AG04450 (cell line): ENCODE measurements at regions of chr4 and their contacts with region 1.

Region 1: GRCh38 chr4:86043755-86044592 is 315.9 kb downstream of the MAPK10 start:
- DNase-seq: no peak
- H3K4me3 ChIP-seq: no peak overlapping the region
- H3K27ac ChIP-seq: no peak overlapping the region
- H3K27me3 ChIP-seq: no peaks in the 10 kb centered on the region
- CTCF ChIP-seq: peak; percentile 69

Region 2: DNA sequence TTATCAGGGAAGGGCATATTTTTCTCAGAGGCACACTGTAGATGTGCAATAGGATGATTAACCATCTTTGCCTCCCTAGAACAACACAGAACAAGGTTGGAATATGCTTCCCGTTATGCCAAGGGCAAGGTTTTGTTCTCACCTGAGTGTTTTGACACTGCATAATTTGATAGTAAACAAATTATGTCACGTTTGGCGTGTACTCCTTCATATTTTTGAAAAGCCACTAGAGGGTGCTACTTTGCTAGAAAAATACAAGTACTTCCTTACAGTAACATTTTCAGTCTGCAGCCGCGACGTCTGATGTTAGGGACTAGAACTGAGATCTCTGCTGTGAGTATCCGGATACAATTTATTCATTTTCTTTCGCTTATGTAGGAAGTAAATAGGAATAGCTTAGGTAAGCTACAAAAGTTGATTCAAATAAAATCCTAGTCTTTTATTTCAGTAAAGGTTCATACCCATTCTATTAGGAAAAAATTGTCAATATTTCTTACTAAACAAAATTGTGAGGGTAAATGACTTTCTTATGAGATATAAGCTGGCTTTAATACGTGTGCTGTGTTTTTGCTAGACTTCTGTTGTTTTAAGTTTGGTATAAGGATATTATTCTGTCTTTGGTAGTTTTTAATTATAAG is 896.4 kb before region 1 on chr4:
- CTCF ChIA-PET with region 1: interaction called, 20 read pairs
- POLR2A ChIA-PET with region 1: no interaction called
- DNase-seq: peak; percentile 6
- H3K4me3 ChIP-seq: no peak overlapping the region
- H3K27ac ChIP-seq: no peak overlapping the region
- H3K27me3 ChIP-seq: no peaks in the 10 kb centered on the region
- CTCF ChIP-seq: peak; percentile 70

Region 3: DNA sequence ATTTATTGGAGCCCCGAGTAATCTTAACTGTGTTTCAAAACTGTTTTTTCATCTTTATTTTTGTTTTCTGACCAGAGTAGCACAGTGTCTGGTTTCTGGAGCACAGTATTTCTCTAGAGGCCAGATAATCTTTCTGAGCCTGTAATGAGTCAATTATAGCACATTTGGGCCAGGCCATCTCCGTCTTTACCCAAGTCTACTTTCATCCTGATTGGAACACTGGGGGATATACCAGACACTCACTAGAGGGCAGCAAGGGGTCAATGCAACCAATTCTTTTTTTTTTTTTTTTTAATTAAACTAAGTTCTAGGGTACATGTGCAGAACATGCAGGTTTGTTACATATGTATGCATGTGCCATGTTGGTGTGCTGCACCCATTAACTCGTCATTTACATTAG is 287.0 kb before region 1 on chr4:
- CTCF ChIA-PET with region 1: interaction called, 14 read pairs
- POLR2A ChIA-PET with region 1: no interaction called
- DNase-seq: no peak
- H3K4me3 ChIP-seq: no peak overlapping the region
- H3K27ac ChIP-seq: no peak overlapping the region
- H3K27me3 ChIP-seq: no peaks in the 10 kb centered on the region
- CTCF ChIP-seq: peak; percentile 67

Region 4: GRCh38 chr4:86032476-86033022 is 11.4 kb before region 1 on chr4:
- CTCF ChIA-PET with region 1: interaction called, 12 read pairs
- POLR2A ChIA-PET with region 1: no interaction called
- DNase-seq: no peak
- H3K4me3 ChIP-seq: no peak overlapping the region
- H3K27ac ChIP-seq: peak overlapping the region; percentile 57
- H3K27me3 ChIP-seq: no peaks in the 10 kb centered on the region
- CTCF ChIP-seq: no peak

Region 5: DNA sequence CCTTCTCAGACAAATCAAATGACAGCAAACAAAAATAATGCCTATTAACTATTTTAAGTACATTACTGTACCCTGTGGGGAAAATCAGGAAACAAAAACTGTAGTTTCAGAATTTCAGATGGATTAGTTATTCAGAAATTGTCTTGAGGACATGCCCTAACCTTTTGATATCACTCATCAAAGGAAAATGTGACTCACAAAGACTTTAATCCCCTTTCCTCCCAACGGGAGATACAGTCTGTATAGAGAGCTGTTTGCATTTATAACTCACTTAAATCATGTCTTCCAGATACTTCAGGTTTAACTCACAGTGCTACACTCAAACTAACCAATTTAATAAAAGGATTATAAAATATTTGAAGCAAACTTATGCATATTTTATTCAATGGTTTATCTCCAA is 11.9 kb after region 1 on chr4:
- CTCF ChIA-PET with region 1: interaction called, 21 read pairs
- POLR2A ChIA-PET with region 1: no interaction called
- DNase-seq: no peak
- H3K4me3 ChIP-seq: no peak overlapping the region
- H3K27ac ChIP-seq: no peak overlapping the region
- H3K27me3 ChIP-seq: no peaks in the 10 kb centered on the region
- CTCF ChIP-seq: no peak

Region 6: GRCh38 chr4:86106475-86106874 is 62.5 kb after region 1 on chr4:
- CTCF ChIA-PET with region 1: no interaction called
- POLR2A ChIA-PET with region 1: no interaction called
- DNase-seq: no peak
- H3K4me3 ChIP-seq: no peak overlapping the region
- H3K27ac ChIP-seq: no peak overlapping the region
- H3K27me3 ChIP-seq: no peaks in the 10 kb centered on the region
- CTCF ChIP-seq: no peak